Activated naive CD4-positive, alpha-beta T cell treated with anti-CD3 and anti-CD28 coated beads for 36 hours (primary cell): ENCODE measurements at regions of chr1 and their contacts with region 1.

Region 1: GRCh38 chr1:84753516-84754385 is 63.5 kb upstream of the SSX2IP start:
- DNase-seq: peak; percentile 86
- H3K4me3 Mint-ChIP-seq: no peak overlapping the region
- H3K27ac Mint-ChIP-seq: no peak overlapping the region
- H3K4me1 Mint-ChIP-seq: peaks cover 6% of the 10 kb centered on the region
- H3K27me3 Mint-ChIP-seq: peaks cover 6% of the 10 kb centered on the region

Region 2: DNA sequence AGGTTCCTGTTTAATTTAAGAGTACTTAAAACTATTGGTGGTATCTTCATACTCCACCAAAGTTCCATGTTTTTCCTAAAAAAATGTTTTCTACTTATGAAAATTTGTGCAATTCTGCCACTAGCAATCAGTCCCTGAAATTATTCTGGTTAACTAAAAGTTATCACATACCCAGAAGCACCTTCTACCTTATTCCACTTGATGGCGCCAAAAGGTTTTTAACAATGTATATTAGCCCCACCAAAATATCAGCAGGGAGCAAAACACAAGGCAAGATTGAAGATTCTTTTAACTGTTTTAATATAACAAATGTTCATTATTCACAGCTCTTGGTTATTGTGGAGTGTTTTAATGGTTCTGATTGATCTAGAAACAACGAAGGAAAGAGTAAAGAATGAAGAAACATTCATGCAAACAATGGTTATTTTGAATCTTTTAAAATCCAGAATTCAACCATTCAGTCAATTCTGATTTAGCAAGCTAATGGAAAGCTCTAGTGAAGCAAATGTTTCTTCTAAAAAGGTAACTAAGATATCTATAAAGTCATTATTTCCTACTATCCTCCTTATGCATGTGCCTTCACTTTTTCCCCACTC is 822.0 kb before region 1 on chr1:
- CTCF ChIA-PET with region 1: no interaction called
- intact Hi-C with region 1: loop called (anchors 1 kb)
- DNase-seq: peak; percentile 24
- H3K4me3 Mint-ChIP-seq: no peak overlapping the region
- H3K27ac Mint-ChIP-seq: no peak overlapping the region
- H3K4me1 Mint-ChIP-seq: no peaks in the 10 kb centered on the region
- H3K27me3 Mint-ChIP-seq: peaks cover 8% of the 10 kb centered on the region

Region 3: DNA sequence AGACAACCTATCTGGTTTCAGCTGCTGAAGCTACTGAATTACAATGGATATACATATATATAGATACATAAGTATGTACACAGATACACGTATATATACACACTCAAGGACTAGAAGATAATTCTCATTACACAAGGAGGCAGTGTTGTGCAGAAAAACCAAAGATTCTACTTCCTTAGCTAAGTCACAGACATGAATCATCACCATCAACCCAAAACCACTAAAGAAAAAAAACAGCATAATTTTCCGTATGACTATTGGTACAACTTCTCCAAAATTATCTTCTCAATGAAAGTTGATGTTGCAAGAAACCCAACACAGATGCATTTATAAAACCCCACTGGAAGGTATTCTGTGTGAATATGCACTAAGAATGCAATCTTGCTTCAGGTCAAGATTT is 311.5 kb before region 1 on chr1:
- CTCF ChIA-PET with region 1: interaction called, 20 read pairs
- intact Hi-C with region 1: loop called (anchors 1 kb)
- DNase-seq: no peak
- H3K4me3 Mint-ChIP-seq: no peak overlapping the region
- H3K27ac Mint-ChIP-seq: no peak overlapping the region
- H3K4me1 Mint-ChIP-seq: peaks cover 25% of the 10 kb centered on the region
- H3K27me3 Mint-ChIP-seq: no peaks in the 10 kb centered on the region

Region 4: GRCh38 chr1:84668185-84668584 is 85.6 kb before region 1 on chr1:
- CTCF ChIA-PET with region 1: interaction called, 7 read pairs
- intact Hi-C with region 1: loop called (anchors 1 kb)
- DNase-seq: peak; percentile 13
- H3K4me3 Mint-ChIP-seq: no peak overlapping the region
- H3K27ac Mint-ChIP-seq: no peak overlapping the region
- H3K4me1 Mint-ChIP-seq: peaks cover 5% of the 10 kb centered on the region
- H3K27me3 Mint-ChIP-seq: no peaks in the 10 kb centered on the region

Region 5: GRCh38 chr1:84742653-84743052 is 11.1 kb before region 1 on chr1:
- CTCF ChIA-PET with region 1: interaction called, 11 read pairs
- intact Hi-C with region 1: no loop called
- DNase-seq: no peak
- H3K4me3 Mint-ChIP-seq: no peak overlapping the region
- H3K27ac Mint-ChIP-seq: no peak overlapping the region
- H3K4me1 Mint-ChIP-seq: no peaks in the 10 kb centered on the region
- H3K27me3 Mint-ChIP-seq: no peaks in the 10 kb centered on the region

Region 6: DNA sequence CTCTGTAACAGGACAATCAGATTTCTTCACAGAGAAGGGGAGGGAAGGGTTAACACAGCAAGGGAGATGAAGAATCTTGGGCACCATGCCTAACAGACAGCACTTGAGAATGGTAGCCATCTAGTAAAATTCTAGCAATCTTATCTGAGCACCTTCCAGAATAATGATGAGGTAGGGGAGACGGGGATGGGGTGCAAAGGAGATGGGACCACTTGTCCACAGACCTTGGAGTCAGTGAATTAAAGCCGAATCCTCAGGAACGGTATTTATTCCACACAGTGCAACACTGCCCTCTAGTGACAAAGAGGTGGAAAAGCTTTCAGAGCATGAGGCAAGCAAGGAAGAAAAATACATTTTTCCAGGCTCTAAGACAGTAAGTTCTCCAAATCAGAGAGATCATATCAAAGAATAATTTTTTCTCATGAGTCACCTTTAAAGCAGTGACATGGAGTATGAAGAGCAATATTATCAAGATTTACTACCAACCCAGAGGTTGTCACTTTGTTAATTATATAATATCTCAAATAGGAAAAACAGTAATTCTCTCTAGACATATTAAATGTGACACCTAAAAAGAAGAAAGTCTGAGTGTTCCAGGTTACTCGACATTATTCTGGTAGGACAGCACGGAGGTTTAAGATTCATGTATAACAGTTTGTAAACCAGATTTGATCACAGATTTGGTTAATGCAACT is 182.5 kb after region 1 on chr1:
- CTCF ChIA-PET with region 1: interaction called, 10 read pairs
- intact Hi-C with region 1: loop called (anchors 2 kb)
- DNase-seq: peak; percentile 43
- H3K4me3 Mint-ChIP-seq: no peak overlapping the region
- H3K27ac Mint-ChIP-seq: no peak overlapping the region
- H3K4me1 Mint-ChIP-seq: peaks cover 4% of the 10 kb centered on the region
- H3K27me3 Mint-ChIP-seq: no peaks in the 10 kb centered on the region